ENCODE measurements at regions of chr5 and their contacts with region 1.

Region 1: DNA sequence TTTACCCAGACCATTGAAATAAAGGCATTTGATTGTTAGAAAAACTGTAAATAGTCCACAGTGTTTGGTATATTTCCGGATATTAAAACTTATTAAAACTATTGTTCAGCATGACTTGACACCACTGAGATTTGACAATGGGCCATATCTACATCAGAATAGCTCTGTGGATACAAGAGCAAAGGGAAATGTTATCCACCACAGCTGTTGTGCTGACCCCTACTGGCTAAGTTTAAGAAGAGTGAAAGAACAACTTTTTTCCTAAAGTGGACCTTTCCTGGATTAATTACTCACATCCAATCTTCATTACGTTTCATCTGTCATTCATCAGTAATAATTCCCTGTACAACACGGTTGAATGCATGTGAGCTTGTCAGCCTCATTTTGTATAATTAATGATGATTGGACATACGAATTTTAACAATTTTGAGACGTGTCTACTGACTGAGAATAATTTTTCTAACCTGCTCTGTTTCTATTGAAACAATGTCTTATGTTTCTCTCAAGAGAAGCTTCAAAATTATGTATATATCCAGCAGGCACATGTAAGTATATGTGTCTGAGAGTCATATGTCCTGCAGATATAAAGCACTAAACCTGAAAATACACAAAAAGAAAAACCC is 1952.6 kb downstream of the MAT2B start:
- DNase-seq: peak; percentile 55
- ATAC-seq: peak; percentile 81
- H3K4me3 ChIP-seq: no peak overlapping the region
- H3K27ac ChIP-seq: no peak overlapping the region
- H3K4me1 ChIP-seq: no peaks in the 10 kb centered on the region
- H3K27me3 ChIP-seq: no peaks in the 10 kb centered on the region
- CTCF ChIP-seq: peak; percentile 54
- POLR2A ChIP-seq: no peak
- RAD21 ChIP-seq: peak; percentile 62

Region 2: DNA sequence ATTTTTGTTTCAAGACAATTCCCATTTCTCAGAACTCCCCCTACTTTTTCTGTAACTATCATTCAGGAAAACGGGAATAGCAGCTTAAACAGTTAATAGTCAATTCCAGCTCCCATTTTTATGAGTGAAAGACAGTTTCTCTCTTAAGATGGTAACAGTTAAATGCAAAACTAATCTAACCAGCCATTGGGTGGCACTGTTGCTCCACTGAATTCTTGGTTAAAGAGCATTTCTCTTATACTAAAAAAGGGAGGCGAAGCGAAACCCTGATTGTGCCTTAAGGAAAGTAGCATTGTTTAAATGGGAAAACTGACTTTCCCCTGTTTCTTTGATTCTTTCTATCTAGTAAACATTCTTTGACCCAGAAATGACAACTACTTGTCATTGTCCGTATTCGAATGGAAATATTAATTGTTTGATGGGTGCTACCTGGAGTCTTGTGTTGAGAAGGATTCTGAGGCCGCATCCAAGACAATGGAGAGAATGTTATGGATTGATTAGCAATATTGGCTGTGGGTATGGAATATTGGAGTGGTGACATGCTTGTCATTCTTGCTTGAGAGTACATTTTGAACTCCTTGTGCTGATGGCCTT is 1444.8 kb before region 1 on chr5:
- CTCF ChIA-PET with region 1: no interaction called
- POLR2A ChIA-PET with region 1: no interaction called
- dilution Hi-C with region 1: no loop called
- in situ Hi-C with region 1: no loop called
- intact Hi-C with region 1: loop called (anchors 1 kb)
- DNase-seq: peak; percentile 86
- ATAC-seq: peak; percentile 86
- H3K4me3 ChIP-seq: no peak overlapping the region
- H3K27ac ChIP-seq: no peak overlapping the region
- H3K4me1 ChIP-seq: no peaks in the 10 kb centered on the region
- H3K27me3 ChIP-seq: no peaks in the 10 kb centered on the region
- CTCF ChIP-seq: peak; percentile 84
- POLR2A ChIP-seq: no peak
- RAD21 ChIP-seq: peak; percentile 90

Region 3: DNA sequence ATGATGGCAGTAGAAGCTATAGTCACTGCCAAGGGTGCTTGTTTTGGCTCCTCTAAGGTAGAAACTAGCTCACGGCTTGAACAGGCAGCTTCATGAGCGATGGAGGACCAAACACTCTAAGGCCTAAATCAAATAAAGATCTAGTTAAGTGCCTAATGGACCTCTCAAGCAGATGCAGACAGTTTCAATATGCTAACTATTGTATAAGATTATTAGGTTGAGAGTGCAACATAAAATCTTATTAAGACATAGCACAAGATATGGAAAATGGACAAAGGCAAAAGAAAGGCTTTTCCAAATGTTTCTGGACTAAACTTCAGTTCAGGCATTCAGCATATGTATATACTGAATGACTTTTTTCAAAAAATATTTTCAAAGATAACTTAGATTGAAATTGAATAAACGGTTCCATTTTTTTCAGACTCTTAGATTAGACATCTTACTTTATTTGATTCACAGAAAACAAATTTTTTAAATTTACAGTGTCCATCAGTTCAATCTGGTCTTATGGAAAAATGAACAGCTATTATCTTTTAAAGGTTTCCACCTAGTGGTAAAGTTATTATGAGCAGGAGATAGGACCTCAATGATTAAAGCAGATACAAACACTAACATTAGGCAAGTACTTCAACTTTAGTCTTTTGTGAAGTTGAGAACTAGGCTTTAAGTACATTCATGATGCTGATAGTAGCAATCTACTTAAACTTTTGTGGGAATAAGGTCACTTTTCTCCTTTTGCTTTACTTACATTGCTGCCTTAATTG is 784.9 kb before region 1 on chr5:
- CTCF ChIA-PET with region 1: no interaction called
- POLR2A ChIA-PET with region 1: no interaction called
- dilution Hi-C with region 1: no loop called
- in situ Hi-C with region 1: no loop called
- intact Hi-C with region 1: loop called (anchors 2 kb)
- DNase-seq: peak; percentile 17
- ATAC-seq: peak; percentile 69
- H3K4me3 ChIP-seq: no peak overlapping the region
- H3K27ac ChIP-seq: no peak overlapping the region
- H3K4me1 ChIP-seq: 0 out of 2 replicates have a peak, but pooled peaks cover 2% of the 10 kb centered on the region
- H3K27me3 ChIP-seq: no peaks in the 10 kb centered on the region
- CTCF ChIP-seq: peak; percentile 28
- POLR2A ChIP-seq: no peak
- RAD21 ChIP-seq: peak; percentile 16; the same call in 1 of the 2 replicates

Region 4: DNA sequence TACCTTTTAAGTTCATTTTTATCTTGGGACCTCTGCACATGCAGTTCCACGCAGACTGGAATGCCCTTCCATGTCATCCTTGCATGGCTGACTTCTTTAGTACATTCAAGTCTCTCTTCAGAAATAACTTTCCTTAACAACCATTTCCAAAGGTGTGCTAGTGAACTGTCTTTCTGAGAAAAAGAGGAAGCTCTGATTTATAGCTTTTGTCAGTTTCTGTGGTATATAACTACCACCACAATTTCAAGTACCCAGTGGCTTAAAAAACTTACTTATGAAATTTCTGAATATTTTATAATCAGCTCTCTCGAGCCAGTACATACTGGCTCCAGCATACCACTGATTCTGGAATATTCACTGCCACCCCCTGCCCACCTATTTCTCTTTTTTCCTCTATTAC is 338.8 kb before region 1 on chr5:
- CTCF ChIA-PET with region 1: no interaction called
- POLR2A ChIA-PET with region 1: no interaction called
- dilution Hi-C with region 1: no loop called
- in situ Hi-C with region 1: no loop called
- intact Hi-C with region 1: loop called (anchors 5 kb)
- DNase-seq: no peak
- ATAC-seq: no peak
- H3K4me3 ChIP-seq: no peak overlapping the region
- H3K27ac ChIP-seq: no peak overlapping the region
- H3K4me1 ChIP-seq: no peaks in the 10 kb centered on the region
- H3K27me3 ChIP-seq: no peaks in the 10 kb centered on the region
- CTCF ChIP-seq: no peak
- POLR2A ChIP-seq: no peak
- RAD21 ChIP-seq: no peak

Region 5: GRCh38 chr5:165227511-165227910 is 230.5 kb before region 1 on chr5:
- CTCF ChIA-PET with region 1: no interaction called
- POLR2A ChIA-PET with region 1: no interaction called
- dilution Hi-C with region 1: no loop called
- in situ Hi-C with region 1: no loop called
- intact Hi-C with region 1: loop called (anchors 5 kb)
- DNase-seq: no peak
- ATAC-seq: no peak
- H3K4me3 ChIP-seq: no peak overlapping the region
- H3K27ac ChIP-seq: no peak overlapping the region
- H3K4me1 ChIP-seq: no peaks in the 10 kb centered on the region; the same call in 1 of the 2 replicates
- H3K27me3 ChIP-seq: no peaks in the 10 kb centered on the region
- CTCF ChIP-seq: no peak
- POLR2A ChIP-seq: no peak
- RAD21 ChIP-seq: no peak

Measured in IMR-90 (cell line).